A549 (cell line): ENCODE measurements at regions of chr16 and their contacts with region 1.

Region 1: GRCh38 chr16:74666425-74667254 is at the start of gene RFWD3:
- DNase-seq: peak; percentile 99 to 100
- ATAC-seq: peak; percentile 100
- H3K4me3 ChIP-seq: peak within 1 kb of the TSS; percentile 91
- H3K27ac ChIP-seq: peak within 1 kb of the TSS; percentile 88 to 93
- H3K4me1 ChIP-seq: peaks cover 12% of the 10 kb centered on the region; the same call in 1 of the 3 replicates
- CTCF ChIP-seq: no peak
- EP300 ChIP-seq: no peak
- POLR2A ChIP-seq: peak; percentile 85
- RAD21 ChIP-seq: no peak
- polyA plus RNA-seq, gene RFWD3: 50.6 and 52.5 TPM in 2 replicates

Region 2: GRCh38 chr16:74650966-74651567 is 15.6 kb before region 1 on chr16:
- CTCF ChIA-PET with region 1: interaction called, 14 read pairs
- POLR2A ChIA-PET with region 1: interaction called, 10 read pairs
- DNase-seq: peak in 1 of 2 experiments; percentile 29
- ATAC-seq: peak in 1 of 2 experiments; percentile 53; a peak in 3 of 6 replicates
- H3K4me3 ChIP-seq: no peak overlapping the region
- H3K27ac ChIP-seq: no peak overlapping the region
- H3K4me1 ChIP-seq: no peaks in the 10 kb centered on the region
- CTCF ChIP-seq: peak; percentile 80
- EP300 ChIP-seq: no peak
- POLR2A ChIP-seq: no peak
- RAD21 ChIP-seq: peak in 1 of 2 experiments; percentile 20; a peak in 1 of 5 replicates

Region 3: GRCh38 chr16:74695450-74696422 is 29.1 kb after region 1 on chr16:
- CTCF ChIA-PET with region 1: interaction called, 4 read pairs
- POLR2A ChIA-PET with region 1: interaction called, 18 read pairs
- DNase-seq: peak; percentile 93 to 98
- ATAC-seq: peak; percentile 94 to 96
- H3K4me3 ChIP-seq: peak overlapping the region; percentile 35
- H3K27ac ChIP-seq: peak overlapping the region; percentile 58 to 77; a peak in 5 of 6 replicates
- H3K4me1 ChIP-seq: peaks cover 23% of the 10 kb centered on the region; the same call in 2 of the 3 replicates
- CTCF ChIP-seq: no peak
- EP300 ChIP-seq: no peak
- POLR2A ChIP-seq: peak; percentile 61
- RAD21 ChIP-seq: no peak